Activated CD4-positive, alpha-beta T cell treated with anti-CD3 and anti-CD28 coated beads for 36 hours (primary cell): ENCODE measurements at regions of chr14 and their contacts with region 1.

Region 1: GRCh38 chr14:21103710-21104447 is 3.0 kb downstream of the TMEM253 start:
- DNase-seq: peak; percentile 97
- ATAC-seq: peak; percentile 88
- H3K4me3 Mint-ChIP-seq: peak overlapping the region; percentile 83
- H3K27ac Mint-ChIP-seq: peak overlapping the region; percentile 98
- H3K4me1 Mint-ChIP-seq: peaks cover 38% of the 10 kb centered on the region
- H3K27me3 Mint-ChIP-seq: no peaks in the 10 kb centered on the region

Region 2: DNA sequence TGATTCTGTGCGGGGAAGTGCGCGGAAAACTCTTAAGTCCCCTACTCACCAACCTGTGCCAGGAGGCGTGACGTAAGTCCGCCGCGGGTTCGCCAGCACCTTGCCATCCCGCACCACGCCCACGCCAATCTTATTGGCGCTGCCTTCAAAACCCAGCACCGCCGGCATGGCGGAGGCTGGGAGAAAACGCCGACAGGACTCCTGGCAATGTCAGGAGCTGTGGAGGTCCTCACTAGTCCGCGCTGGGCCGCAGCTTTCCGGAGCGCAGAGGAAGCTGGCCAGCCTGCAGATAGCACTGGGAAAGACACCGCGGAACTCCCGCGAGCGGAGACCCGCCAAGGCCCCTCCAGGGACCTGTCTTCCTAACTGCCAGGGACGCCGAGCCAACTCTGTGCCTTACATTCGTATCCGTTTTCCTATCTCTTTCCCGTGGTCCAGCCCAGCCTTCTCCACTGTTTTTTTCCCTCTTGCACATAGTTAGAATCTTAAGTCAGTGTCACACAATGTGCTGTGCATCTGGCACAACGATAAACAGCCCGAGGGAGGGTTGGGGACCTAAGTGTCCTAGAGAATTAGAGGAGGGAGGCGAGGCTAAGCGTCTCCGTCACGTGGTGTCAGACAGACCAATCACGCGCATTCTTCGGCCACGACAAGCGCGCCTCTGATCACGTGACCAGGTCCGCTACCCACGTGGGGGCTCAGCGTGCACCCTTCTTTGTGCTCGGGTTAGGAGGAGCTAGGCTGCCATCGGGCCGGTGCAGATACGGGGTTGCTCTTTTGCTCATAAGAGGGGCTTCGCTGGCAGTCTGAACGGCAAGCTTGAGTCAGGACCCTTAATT is 649.1 kb before region 1 on chr14 and contains the starts of genes APEX1 and OSGEP:
- CTCF ChIA-PET with region 1: no interaction called
- POLR2A ChIA-PET with region 1: no interaction called
- intact Hi-C with region 1: loop called in 1 of 2 experiments (anchors 5 kb)
- DNase-seq: peak; percentile 99
- ATAC-seq: peak; percentile 89
- H3K4me3 Mint-ChIP-seq: no peak within 1 kb of the TSS
- H3K27ac Mint-ChIP-seq: no peak within 1 kb of the TSS
- H3K4me1 Mint-ChIP-seq: peaks cover 18% of the 10 kb centered on the region
- H3K27me3 Mint-ChIP-seq: no peaks in the 10 kb centered on the region
- total RNA-seq, gene APEX1: 216 to 257 TPM
- total RNA-seq, gene OSGEP: 46.2 to 47.5 TPM

Region 3: DNA sequence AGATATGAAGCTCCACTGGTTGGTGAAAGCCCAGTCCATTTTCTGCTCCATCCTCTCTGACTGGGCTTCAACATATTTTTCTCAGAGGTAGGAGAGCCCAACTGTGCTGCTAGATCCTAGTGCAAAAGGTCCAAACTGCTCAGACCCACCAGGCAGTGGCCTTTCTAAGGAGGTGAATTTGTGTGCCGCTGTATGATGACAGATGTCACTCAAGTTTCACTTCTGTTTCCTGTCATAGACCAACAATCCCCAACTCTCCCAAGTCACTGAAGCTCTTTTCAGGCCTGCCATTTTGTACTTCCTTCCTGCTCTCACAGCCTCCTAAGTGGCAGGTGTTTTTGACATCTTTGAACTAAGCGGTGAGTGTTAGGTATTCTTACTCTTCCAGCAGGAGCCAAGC is 435.9 kb before region 1 on chr14:
- CTCF ChIA-PET with region 1: no interaction called
- POLR2A ChIA-PET with region 1: no interaction called
- intact Hi-C with region 1: no loop called
- DNase-seq: peak; percentile 44
- ATAC-seq: peak; percentile 73
- H3K4me3 Mint-ChIP-seq: no peak overlapping the region
- H3K27ac Mint-ChIP-seq: peak overlapping the region; percentile 86
- H3K4me1 Mint-ChIP-seq: peaks cover 21% of the 10 kb centered on the region
- H3K27me3 Mint-ChIP-seq: no peaks in the 10 kb centered on the region

Region 4: DNA sequence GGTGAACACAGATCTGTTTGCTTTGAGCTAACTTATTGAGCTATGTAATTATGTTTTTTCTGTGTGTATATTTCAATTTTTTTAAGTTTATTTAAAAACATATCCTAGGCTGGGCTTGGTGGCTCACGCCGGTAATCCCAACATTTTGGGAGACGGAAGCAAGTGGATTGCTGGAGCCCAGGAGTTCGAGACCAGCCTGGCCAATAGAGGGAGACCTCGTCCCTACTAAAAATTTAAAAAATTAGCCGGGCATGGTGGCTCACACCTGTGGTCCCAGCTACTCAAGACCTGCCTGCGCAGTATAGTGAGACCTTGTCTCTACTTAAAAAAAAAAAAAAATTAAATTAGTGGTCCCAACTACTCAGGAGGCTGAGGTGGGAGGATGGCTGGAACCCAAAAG is 285.0 kb before region 1 on chr14:
- CTCF ChIA-PET with region 1: no interaction called
- POLR2A ChIA-PET with region 1: no interaction called
- intact Hi-C with region 1: no loop called
- DNase-seq: peak; percentile 25
- ATAC-seq: no peak
- H3K4me3 Mint-ChIP-seq: no peak overlapping the region
- H3K27ac Mint-ChIP-seq: no peak overlapping the region
- H3K4me1 Mint-ChIP-seq: no peaks in the 10 kb centered on the region
- H3K27me3 Mint-ChIP-seq: peaks cover 2% of the 10 kb centered on the region

Region 5: DNA sequence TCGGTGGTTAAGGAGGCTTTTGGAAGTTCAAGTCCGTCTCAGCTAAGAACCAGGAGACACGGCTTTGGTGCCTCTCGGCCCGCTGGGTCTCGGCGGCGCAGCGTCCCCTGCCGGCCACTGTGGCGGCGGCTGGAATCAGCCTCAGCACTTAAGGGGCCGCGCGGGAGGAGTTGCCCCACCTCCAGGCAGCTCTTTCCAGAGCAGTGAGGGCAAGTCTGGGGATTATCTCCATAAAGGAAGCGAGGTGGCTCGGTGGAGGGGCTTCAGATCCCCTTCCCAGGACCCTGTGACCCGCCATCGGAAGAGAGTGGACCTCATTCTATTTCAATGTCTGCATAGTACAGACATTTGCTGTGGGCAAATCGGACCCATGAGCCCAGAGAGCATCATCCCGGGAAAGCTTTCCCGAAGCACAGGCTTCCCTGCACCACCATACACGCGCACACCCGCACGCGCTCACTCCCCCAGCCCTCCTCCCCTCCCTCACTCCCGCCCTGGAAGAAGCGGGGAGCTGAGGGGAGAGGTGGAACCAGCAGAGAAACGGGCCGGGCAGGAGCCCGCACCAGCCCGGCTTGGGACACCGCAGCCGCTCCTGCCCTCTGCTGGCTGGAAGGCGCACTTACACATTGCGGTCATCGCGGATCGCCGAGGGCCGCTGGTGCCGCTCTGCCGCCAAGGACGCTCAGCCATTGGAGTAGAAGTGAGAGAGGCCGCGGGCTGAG is 132.7 kb before region 1 on chr14:
- CTCF ChIA-PET with region 1: interaction called, 13 read pairs
- POLR2A ChIA-PET with region 1: no interaction called
- intact Hi-C with region 1: no loop called
- DNase-seq: peak; percentile 90
- ATAC-seq: peak; percentile 89
- H3K4me3 Mint-ChIP-seq: peak overlapping the region; percentile 76
- H3K27ac Mint-ChIP-seq: peak overlapping the region; percentile 73
- H3K4me1 Mint-ChIP-seq: peaks cover 7% of the 10 kb centered on the region
- H3K27me3 Mint-ChIP-seq: peaks cover 29% of the 10 kb centered on the region

Region 6: DNA sequence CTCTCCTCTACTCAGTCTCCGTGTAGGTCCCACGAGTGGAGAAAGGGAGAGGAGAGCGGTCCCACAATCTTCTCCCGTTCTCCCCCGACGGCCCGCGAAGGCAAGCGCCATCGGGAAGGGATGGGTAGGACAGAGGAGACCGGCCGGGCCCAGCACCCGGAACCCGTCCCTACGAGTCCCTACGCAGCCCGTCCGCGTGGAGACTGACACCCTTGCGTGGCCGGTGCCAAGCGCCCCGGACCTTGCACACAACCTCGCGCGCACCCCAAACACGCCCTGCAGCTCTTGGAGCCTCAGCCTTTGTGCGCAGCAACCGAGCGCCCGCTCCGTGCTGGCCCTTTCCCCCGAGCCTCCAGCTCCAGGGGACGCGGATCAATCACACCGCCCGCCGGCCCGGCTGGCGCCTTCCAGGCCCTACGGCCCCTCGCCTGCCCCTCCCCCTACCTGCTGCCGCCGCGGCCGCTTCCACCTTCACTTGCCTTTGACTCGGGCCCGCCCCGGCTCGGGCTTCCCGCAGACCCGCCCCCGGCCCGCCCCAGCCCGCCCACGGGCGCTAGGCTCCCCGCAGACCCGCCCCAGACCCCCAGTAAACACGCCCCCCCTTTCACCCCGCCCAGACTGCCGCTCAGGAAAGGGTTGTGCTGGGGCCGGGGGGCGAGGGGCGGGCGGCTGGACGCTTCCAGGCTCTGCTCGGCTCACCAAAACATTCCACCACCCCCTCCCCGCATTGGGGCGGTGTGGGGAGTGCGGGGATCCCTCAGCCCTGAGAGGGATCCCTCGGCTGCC is 79.1 kb before region 1 on chr14 and contains the start of gene NDRG2:
- CTCF ChIA-PET with region 1: interaction called, 29 read pairs
- POLR2A ChIA-PET with region 1: no interaction called
- intact Hi-C with region 1: no loop called
- DNase-seq: peak; percentile 80
- ATAC-seq: peak; percentile 74
- H3K4me3 Mint-ChIP-seq: peak within 1 kb of the TSS; percentile 73
- H3K27ac Mint-ChIP-seq: peak within 1 kb of the TSS; percentile 55
- H3K4me1 Mint-ChIP-seq: peaks cover 16% of the 10 kb centered on the region
- H3K27me3 Mint-ChIP-seq: peaks cover 2% of the 10 kb centered on the region
- total RNA-seq, gene NDRG2: 5.5 to 7.0 TPM

Region 7: GRCh38 chr14:21123429-21123828 is 19.6 kb after region 1 on chr14:
- CTCF ChIA-PET with region 1: interaction called, 11 read pairs
- POLR2A ChIA-PET with region 1: no interaction called
- intact Hi-C with region 1: no loop called
- DNase-seq: no peak
- ATAC-seq: no peak
- H3K4me3 Mint-ChIP-seq: no peak overlapping the region
- H3K27ac Mint-ChIP-seq: no peak overlapping the region
- H3K4me1 Mint-ChIP-seq: no peaks in the 10 kb centered on the region
- H3K27me3 Mint-ChIP-seq: peaks cover 9% of the 10 kb centered on the region

Region 8: DNA sequence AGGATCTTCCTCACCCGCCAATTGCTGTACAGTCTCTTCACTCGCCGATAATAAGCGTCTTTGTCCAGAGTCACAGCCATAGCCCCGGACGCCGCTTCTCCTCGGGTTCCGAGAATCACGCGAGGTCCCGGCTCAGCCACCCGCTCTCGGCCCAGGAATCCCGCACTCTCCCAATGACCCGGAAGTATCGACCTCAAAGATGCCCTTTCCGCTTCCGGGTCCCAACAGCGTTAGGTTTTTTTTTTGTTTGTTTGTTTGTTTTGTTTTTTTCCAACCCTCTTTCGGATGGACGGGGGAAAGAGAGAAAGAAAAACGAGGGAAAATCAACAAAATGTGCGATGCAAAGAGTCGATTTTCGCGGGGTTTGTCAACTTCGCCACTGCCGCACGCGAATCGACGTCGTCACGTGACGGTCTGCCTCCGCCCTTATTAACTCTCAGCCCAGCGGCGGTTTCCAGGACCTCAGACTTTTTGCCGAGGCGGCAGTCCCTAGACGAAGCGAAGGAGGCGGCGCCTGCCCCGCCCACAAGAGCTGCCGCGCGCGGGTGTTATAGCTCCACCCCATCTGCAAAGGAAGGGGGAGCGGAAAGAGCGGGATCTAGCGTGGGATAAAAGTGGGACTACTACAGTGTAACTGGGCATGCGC is 280.1 kb after region 1 on chr14 and contains the start of gene SUPT16H:
- CTCF ChIA-PET with region 1: no interaction called
- POLR2A ChIA-PET with region 1: interaction called, 6 read pairs
- intact Hi-C with region 1: loop called in 1 of 2 experiments (anchors 1 kb)
- DNase-seq: peak; percentile 97
- ATAC-seq: peak; percentile 90
- H3K4me3 Mint-ChIP-seq: peak within 1 kb of the TSS; percentile 98
- H3K27ac Mint-ChIP-seq: peak within 1 kb of the TSS; percentile 98
- H3K4me1 Mint-ChIP-seq: peaks cover 36% of the 10 kb centered on the region
- H3K27me3 Mint-ChIP-seq: no peaks in the 10 kb centered on the region
- total RNA-seq, gene SUPT16H: 177 to 179 TPM